Activated CD8-positive, alpha-beta memory T cell treated with anti-CD3 and anti-CD28 coated beads, Interleukin-2, amount 10 ng/mL, durations not matched to agents 7 days and 5 days (primary cell): ENCODE measurements at regions of chr19 and their contacts with region 1.

Region 1: GRCh38 chr19:10717356-10718204 is at the start of gene DNM2:
- DNase-seq: peak; percentile 99
- ATAC-seq: peak; percentile 93
- H3K4me3 Mint-ChIP-seq: peak within 1 kb of the TSS; percentile 98
- H3K27ac Mint-ChIP-seq: peak within 1 kb of the TSS; percentile 90
- H3K4me1 Mint-ChIP-seq: peaks cover 33% of the 10 kb centered on the region
- H3K27me3 Mint-ChIP-seq: no peaks in the 10 kb centered on the region
- total RNA-seq, gene DNM2: 267 to 315 TPM

Region 2: GRCh38 chr19:10602330-10603083 is 115.1 kb before region 1 on chr19:
- CTCF ChIA-PET with region 1: no interaction called
- DNase-seq: peak; percentile 92
- ATAC-seq: peak; percentile 90
- H3K4me3 Mint-ChIP-seq: peak overlapping the region; percentile 90
- H3K27ac Mint-ChIP-seq: peak overlapping the region; percentile 99
- H3K4me1 Mint-ChIP-seq: peaks cover 23% of the 10 kb centered on the region
- H3K27me3 Mint-ChIP-seq: peaks cover 2% of the 10 kb centered on the region

Region 3: DNA sequence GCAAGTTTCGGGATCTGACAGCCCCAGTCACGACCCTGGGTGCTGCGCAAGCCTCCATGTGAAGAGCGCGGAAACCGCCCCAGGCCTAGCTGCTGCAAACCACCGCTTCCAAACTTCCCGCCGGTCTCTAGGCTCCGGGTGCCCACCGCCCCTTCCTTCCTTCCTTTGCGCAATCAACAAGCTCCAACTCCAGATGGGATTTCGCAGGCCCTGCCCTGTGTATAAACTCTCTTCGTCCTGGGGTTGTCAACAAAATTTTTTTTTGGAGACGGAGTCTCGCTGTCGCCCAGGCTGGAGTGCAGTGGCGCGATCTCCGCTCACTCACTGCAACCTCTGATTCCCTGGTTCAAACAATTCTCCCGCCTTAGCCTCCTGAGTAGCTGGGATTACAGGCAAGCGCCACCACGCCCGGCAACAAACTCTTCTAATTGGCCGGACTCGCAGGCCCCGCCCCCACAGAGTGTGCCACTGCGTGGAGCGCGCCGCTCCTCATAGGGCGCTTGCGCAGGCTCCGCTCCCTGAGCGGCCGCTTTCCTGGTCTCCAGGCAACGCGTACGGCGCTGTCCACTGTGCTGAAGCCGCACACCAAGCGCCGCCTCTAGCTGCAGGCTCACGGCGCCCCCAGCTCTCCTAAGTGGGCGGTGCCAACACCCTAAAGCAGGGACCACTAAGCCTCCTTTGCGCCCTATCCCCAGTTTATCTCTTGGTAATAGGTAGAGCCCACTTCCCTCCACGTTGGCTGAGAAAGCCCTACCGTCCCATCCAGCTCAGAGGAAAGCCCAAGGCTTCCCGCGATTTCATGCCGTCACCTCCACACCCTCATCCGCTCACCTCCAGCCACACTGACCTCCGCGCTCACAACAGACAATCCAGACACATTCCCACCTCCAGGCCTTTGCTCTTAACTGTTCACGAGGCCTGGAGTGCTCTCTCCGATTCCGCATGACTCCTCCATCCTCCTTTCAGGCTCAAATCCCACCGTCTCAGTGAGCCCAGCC is 21.9 kb before region 1 on chr19:
- CTCF ChIA-PET with region 1: interaction called, 26 read pairs
- DNase-seq: peak; percentile 94
- ATAC-seq: peak; percentile 99
- H3K4me3 Mint-ChIP-seq: peak overlapping the region; percentile 67
- H3K27ac Mint-ChIP-seq: no peak overlapping the region
- H3K4me1 Mint-ChIP-seq: peaks cover 14% of the 10 kb centered on the region
- H3K27me3 Mint-ChIP-seq: peaks cover 12% of the 10 kb centered on the region

Region 4: GRCh38 chr19:10760273-10760944 is 42.8 kb after region 1 on chr19:
- CTCF ChIA-PET with region 1: interaction called, 63 read pairs
- DNase-seq: peak; percentile 53
- ATAC-seq: peak; percentile 14
- H3K4me3 Mint-ChIP-seq: peak overlapping the region; percentile 51
- H3K27ac Mint-ChIP-seq: peak overlapping the region; percentile 83
- H3K4me1 Mint-ChIP-seq: peaks cover 90% of the 10 kb centered on the region
- H3K27me3 Mint-ChIP-seq: no peaks in the 10 kb centered on the region

Region 5: GRCh38 chr19:10797541-10798256 is 80.1 kb after region 1 on chr19:
- CTCF ChIA-PET with region 1: interaction called, 14 read pairs
- DNase-seq: peak; percentile 97
- ATAC-seq: peak; percentile 90
- H3K4me3 Mint-ChIP-seq: peak overlapping the region; percentile 68
- H3K27ac Mint-ChIP-seq: peak overlapping the region; percentile 90
- H3K4me1 Mint-ChIP-seq: peaks cover 61% of the 10 kb centered on the region
- H3K27me3 Mint-ChIP-seq: no peaks in the 10 kb centered on the region

Region 6: DNA sequence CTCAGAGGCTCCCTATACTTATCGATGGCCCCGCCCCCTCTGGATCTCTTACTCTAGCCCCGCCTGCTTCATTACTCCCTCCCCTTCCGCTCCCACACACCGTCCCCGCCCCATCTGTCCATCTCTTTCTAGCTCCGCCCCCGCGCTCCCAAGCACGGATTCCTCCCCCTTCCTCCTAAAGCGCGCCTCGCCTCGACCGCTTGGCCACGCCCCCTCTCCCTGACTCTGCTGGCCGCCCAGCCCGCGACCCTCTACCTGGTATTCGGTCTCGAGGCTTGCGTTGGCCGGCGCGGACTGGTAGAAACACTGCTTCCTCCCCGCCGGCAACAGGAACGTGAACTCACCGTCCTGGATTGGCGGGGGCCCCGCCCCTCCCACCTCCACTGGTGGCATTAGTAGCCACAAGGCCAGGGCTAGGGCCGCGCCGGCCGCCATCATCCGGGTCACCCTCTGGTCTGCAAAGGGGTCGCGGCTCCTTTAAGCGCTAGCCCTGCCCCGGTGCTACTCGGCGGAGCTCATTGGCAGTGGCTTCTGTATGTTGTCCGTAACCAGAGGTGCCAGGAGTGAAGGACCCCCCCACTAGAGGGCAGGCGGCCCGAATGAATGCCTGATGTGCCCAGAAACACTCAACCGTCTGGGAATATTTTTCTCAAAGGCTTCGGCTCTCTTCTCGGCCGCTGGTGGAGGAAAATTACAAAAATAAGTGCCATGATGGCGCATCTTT is 118.3 kb after region 1 on chr19 and contains the start of gene TMED1:
- CTCF ChIA-PET with region 1: interaction called, 30 read pairs
- DNase-seq: peak; percentile 99
- ATAC-seq: peak; percentile 92
- H3K4me3 Mint-ChIP-seq: peak within 1 kb of the TSS; percentile 88
- H3K27ac Mint-ChIP-seq: peak within 1 kb of the TSS; percentile 96
- H3K4me1 Mint-ChIP-seq: peaks cover 18% of the 10 kb centered on the region
- H3K27me3 Mint-ChIP-seq: no peaks in the 10 kb centered on the region
- total RNA-seq, gene TMED1: 16.0 to 19.2 TPM

Region 7: DNA sequence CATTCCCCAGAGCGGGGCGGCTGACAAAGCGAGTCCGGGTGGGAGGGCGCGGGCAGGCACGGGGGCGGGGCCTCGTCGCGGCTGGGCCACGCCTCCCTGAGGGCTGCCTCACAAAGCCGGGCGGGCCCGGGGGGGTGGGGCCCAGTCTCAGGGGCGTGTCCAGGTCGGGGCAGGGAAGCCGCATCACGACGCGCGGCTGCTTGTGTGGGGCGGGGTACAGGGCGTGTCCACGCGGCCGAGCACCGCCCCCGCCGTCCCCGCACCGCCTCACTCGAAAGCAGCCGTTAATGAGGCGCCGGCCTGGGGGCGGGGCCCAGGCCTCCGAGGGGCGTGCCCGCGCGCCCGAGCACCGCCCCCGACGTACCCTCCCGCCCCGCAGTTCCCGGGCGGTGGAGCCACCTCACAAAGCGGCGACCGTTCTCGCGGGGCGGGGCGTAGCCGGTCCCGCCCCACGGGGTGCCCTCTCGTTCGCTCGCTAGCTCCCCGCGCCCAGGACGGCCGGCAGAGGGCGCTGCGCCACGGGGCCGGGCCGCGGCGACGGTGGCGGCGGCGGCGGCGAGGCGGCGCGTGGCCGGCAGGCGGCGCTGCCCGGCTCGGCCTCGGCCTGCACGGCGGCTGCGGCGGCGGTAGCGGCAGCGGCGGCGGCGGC is 153.5 kb after region 1 on chr19 and contains the start of gene CARM1:
- CTCF ChIA-PET with region 1: interaction called, 132 read pairs
- DNase-seq: peak; percentile 99
- ATAC-seq: peak; percentile 89
- H3K4me3 Mint-ChIP-seq: peak within 1 kb of the TSS; percentile 79
- H3K27ac Mint-ChIP-seq: peak within 1 kb of the TSS; percentile 84
- H3K4me1 Mint-ChIP-seq: peaks cover 29% of the 10 kb centered on the region
- H3K27me3 Mint-ChIP-seq: no peaks in the 10 kb centered on the region
- total RNA-seq, gene CARM1: 38.5 to 48.1 TPM